ENCODE measurements at regions of chr17 and their contacts with region 1.

Region 1: GRCh38 chr17:4789901-4790704 is 1.3 kb downstream of the GLTPD2 start:
- DNase-seq: no peak
- ATAC-seq: peak; percentile 98
- H3K4me3 ChIP-seq: peak overlapping the region; percentile 79
- H3K27ac ChIP-seq: peak overlapping the region; percentile 39; the same call in 1 of the 2 replicates
- H3K4me1 ChIP-seq: peaks cover 12% of the 10 kb centered on the region
- H3K27me3 ChIP-seq: peaks cover 16 to 18% of the 10 kb centered on the region in 2 experiments
- CTCF ChIP-seq: peak; percentile 71 to 86 (median 81)
- EP300 ChIP-seq: no peak
- POLR2A ChIP-seq: peak; percentile 76
- RAD21 ChIP-seq: peak; percentile 38; the same call in 1 of the 2 replicates

Region 2: GRCh38 chr17:4739122-4740024 is 50.7 kb before region 1 on chr17 and contains the starts of genes CXCL16 and ZMYND15:
- CTCF ChIA-PET with region 1: interaction called, 16 read pairs
- POLR2A ChIA-PET with region 1: no interaction called
- RAD21 ChIA-PET with region 1: no interaction called
- SMC1A ChIA-PET with region 1: interaction called, 4 read pairs
- in situ Hi-C with region 1: no loop called
- intact Hi-C with region 1: loop called (anchors 10 kb)
- DNase-seq: no peak
- ATAC-seq: peak; percentile 92
- H3K4me3 ChIP-seq: peak within 1 kb of the TSS; percentile 72
- H3K27ac ChIP-seq: no peak within 1 kb of the TSS
- H3K4me1 ChIP-seq: peaks cover 3% of the 10 kb centered on the region; the same call in 1 of the 2 replicates
- H3K27me3 ChIP-seq: peaks cover 10 to 15% of the 10 kb centered on the region in 2 experiments
- CTCF ChIP-seq: no peak
- EP300 ChIP-seq: no peak
- POLR2A ChIP-seq: no peak
- RAD21 ChIP-seq: no peak
- polyA plus RNA-seq, gene CXCL16: 0.26 to 0.35 TPM
- polyA plus RNA-seq, gene ZMYND15: not detected

Region 3: DNA sequence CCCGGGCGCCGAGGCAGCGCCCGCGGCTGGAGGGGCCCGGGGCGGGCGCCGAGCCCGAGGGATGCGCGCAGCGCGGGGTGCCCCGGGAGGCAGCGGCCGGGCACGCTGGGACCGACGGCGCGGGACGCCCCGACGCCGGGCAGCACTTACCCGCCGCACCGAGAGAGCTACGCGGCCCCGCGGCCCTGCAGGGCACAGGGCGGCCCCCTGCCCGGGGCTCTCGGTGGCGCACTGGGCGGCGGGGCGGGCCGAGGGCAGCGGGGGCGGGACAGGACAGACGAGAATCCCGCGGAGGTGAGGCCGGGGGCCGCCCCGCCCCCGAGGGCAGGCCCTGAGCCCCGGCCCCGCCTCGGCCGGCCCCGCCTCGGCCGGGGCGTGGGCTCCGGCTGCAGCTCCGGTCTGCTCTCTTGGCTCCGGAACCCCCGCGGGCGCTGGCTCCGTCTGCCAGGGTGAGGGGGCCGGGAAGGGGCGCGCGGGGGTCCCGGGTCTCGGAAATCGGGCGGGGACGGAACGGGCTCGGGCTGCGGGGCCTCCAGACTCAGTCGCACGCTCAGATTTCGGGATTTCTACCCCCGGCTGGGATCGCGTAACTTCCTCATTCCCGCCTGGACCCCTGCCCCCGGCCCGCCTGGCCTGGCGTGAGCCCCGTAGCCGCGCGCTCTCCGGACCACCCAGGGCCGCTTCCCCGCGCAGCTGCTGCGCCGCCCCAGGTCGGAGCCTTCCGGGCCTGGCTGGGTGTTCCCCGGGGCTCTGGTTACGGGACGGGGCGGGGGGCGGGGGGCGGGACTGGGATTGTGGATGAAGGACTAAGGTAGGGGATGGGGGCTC is 16.9 kb after region 1 on chr17 and contains the start of gene PLD2:
- CTCF ChIA-PET with region 1: interaction called, 7 read pairs
- POLR2A ChIA-PET with region 1: interaction called, 14 read pairs
- RAD21 ChIA-PET with region 1: interaction called, 3 read pairs
- SMC1A ChIA-PET with region 1: interaction called, 3 read pairs
- in situ Hi-C with region 1: no loop called
- intact Hi-C with region 1: no loop called
- DNase-seq: no peak
- ATAC-seq: peak; percentile 100
- H3K4me3 ChIP-seq: peak within 1 kb of the TSS; percentile 76
- H3K27ac ChIP-seq: no peak within 1 kb of the TSS
- H3K4me1 ChIP-seq: peaks cover 4% of the 10 kb centered on the region
- H3K27me3 ChIP-seq: no peaks in the 10 kb centered on the region
- CTCF ChIP-seq: no peak
- EP300 ChIP-seq: no peak
- POLR2A ChIP-seq: peak; percentile 80
- RAD21 ChIP-seq: no peak
- polyA plus RNA-seq, gene PLD2: 0.71 to 0.73 TPM

Region 4: DNA sequence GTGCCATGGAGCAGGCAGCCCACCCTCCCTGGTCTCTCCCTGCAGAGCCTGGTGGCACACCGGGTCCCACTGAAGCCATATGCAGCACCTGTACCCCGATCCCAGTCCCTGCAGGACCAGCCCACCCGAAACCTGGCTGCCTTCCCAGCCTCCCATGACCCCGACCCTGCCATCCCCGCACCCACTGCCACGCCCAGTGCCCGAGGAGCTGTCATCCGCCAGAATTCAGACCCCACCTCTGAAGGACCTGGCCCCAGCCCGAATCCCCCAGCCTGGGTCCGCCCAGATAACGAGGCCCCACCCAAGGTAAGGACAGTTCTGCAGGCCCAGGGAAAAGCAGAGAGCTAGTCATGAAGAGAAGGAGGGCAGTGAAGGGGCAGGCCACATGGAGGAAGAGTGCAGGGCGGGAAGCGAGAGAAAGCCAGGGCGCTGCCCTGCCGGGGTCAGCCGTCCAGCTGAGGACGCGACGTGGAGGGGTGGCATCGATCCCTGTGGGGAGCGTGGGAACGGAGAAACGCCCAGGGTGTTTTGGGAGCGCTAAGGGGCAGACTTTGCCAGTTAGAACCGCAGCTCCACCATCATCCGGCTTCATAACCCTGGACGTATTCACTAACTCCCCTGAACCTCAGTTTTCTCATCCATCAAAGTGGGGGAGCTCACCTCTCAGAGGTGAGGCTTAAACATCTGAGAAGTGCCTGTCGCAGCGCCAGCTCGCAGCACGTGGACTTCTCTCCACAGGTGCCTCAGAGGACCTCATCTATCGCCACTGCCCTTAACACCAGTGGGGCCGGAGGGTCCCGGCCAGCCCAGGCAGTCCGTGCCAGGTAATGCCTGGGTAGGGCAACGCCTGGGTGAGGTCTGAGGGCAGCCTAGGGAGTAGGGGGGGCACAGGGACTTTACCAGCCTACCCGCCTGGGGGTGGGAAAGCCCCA is 101.6 kb after region 1 on chr17:
- CTCF ChIA-PET with region 1: interaction called, 4 read pairs
- POLR2A ChIA-PET with region 1: no interaction called
- RAD21 ChIA-PET with region 1: no interaction called
- SMC1A ChIA-PET with region 1: interaction called, 4 read pairs
- in situ Hi-C with region 1: no loop called
- intact Hi-C with region 1: loop called (anchors 2 kb)
- DNase-seq: no peak
- ATAC-seq: no peak
- H3K4me3 ChIP-seq: no peak overlapping the region
- H3K27ac ChIP-seq: no peak overlapping the region
- H3K4me1 ChIP-seq: no peaks in the 10 kb centered on the region
- H3K27me3 ChIP-seq: no peaks in the 10 kb centered on the region
- CTCF ChIP-seq: no peak
- EP300 ChIP-seq: no peak
- POLR2A ChIP-seq: peak; percentile 38; the same call in 1 of the 2 replicates
- RAD21 ChIP-seq: no peak

Region 5: DNA sequence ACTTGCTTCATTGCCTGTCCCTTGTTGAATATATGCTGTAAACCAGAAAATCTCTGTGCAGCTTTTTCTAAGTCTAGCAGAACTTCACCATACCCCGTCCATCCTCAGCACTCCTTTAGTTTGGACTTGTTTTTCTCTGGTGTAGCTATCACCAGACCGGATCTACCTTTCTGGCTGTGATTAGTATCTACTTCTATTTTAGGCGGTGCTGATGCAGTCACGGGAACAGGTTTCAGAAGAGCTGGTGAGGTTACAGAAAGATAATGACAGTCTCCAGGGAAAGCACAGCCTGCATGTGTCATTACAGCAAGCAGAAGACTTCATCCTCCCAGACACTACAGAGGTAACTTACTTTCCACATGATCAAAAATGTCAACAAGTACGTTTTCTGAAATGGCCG is 583.0 kb after region 1 on chr17:
- CTCF ChIA-PET with region 1: no interaction called
- POLR2A ChIA-PET with region 1: no interaction called
- RAD21 ChIA-PET with region 1: no interaction called
- SMC1A ChIA-PET with region 1: no interaction called
- in situ Hi-C with region 1: no loop called
- intact Hi-C with region 1: no loop called
- DNase-seq: peak; percentile 61
- ATAC-seq: peak; percentile 96
- H3K4me3 ChIP-seq: no peak overlapping the region
- H3K27ac ChIP-seq: no peak overlapping the region
- H3K4me1 ChIP-seq: no peaks in the 10 kb centered on the region; the same call in 1 of the 2 replicates
- H3K27me3 ChIP-seq: no peaks in the 10 kb centered on the region
- CTCF ChIP-seq: no peak
- EP300 ChIP-seq: peak; percentile 56 to 72; a peak in 3 of 4 replicates
- POLR2A ChIP-seq: no peak
- RAD21 ChIP-seq: no peak

Measured in GM12878 (cell line).